Lower leg skin (tissue), 4 donors: ENCODE measurements at regions of chr2 and their contacts with region 1.

Region 1: DNA sequence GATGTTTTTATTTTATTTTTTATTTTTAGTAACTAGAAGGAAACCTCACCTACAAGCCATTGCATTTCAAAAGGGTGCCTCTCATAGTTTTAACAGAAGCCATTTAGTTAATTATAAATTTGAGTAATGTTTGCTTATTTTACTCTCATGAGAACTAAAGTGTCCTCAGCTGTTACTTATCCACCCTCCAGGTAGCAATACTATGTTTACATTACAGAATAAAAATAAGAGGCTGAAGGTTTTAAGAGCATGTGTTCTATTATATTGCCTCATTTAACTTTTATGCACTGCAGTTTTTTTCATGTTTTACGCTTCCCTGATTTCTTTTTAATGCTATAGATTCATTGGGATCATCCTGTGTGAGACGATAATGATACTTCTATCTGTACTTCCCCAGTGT is 235.5 kb downstream of the THSD7B start:
- DNase-seq: no peak
- H3K4me3 ChIP-seq: no peak overlapping the region
- CTCF ChIP-seq: no peak
- POLR2A ChIP-seq: no peak

Region 2: GRCh38 chr2:136966485-136966884 is 34.3 kb before region 1 on chr2:
- intact Hi-C with region 1: loop called (anchors 1 kb)
- DNase-seq: no peak
- H3K4me3 ChIP-seq: no peak overlapping the region
- CTCF ChIP-seq: no peak
- POLR2A ChIP-seq: no peak